CD4-positive, alpha-beta T cell (primary cell): ENCODE measurements at regions of chr1 and their contacts with region 1.

Region 1: GRCh38 chr1:30779294-30780071 is 21.9 kb upstream of the LAPTM5 start:
- DNase-seq: peak; percentile 78 to 98 (median 92)
- ATAC-seq: peak; percentile 75
- H3K4me3 ChIP-seq: no peak overlapping the region
- H3K4me3 Mint-ChIP-seq: no peak overlapping the region
- H3K27ac ChIP-seq: no peak overlapping the region
- H3K27ac Mint-ChIP-seq: peak overlapping the region; percentile 3
- H3K4me1 ChIP-seq: peaks cover 25% of the 10 kb centered on the region
- H3K4me1 Mint-ChIP-seq: peaks cover 16% of the 10 kb centered on the region
- H3K27me3 ChIP-seq: no peaks in the 10 kb centered on the region
- H3K27me3 Mint-ChIP-seq: no peaks in the 10 kb centered on the region
- CTCF ChIP-seq: peak; percentile 92

Region 2: DNA sequence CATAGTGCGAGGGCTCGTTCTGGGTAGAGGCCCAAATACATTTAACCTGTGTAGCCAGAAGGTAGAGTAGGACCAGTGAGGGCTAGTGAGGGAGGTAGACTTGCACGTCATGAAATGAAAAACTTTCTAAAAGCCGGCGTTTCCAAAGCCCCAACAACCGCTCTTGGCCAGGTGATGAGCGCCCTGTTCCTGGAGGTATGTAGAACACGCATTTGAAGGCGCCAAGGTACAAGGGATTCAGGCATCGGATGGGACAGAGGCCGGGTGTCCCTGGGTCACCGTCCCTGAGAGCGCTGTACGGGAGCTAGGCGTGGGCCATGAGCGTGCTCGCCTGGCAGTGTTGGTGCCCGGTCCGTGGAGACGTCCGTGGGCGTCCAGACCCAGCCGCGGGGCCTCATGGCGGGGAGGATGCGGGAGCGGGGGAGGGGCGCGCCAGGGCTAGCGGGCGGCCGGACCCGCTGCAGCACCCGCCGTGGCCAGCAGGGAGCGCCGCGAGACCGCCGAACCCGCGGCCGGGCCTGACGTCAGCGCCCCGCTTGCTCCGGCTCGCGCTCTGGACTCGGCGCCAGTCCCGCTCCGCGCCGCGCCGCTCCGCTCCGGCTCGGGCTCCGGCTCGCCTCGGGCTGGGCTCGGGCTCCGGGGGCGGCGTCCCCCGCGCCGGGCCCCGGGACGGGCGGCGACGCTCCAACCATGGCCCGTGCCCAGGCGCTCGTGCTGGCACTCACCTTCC is 1543.4 kb before region 1 on chr1 and contains the start of gene PTPRU:
- CTCF ChIA-PET with region 1: no interaction called
- POLR2A ChIA-PET with region 1: no interaction called
- intact Hi-C with region 1: loop called (anchors 2 kb)
- DNase-seq: peak; percentile 39 to 89 (median 77)
- ATAC-seq: peak; percentile 88
- H3K4me3 ChIP-seq: peak within 1 kb of the TSS; percentile 39
- H3K4me3 Mint-ChIP-seq: peak within 1 kb of the TSS; percentile 82
- H3K27ac ChIP-seq: no peak within 1 kb of the TSS
- H3K27ac Mint-ChIP-seq: peak within 1 kb of the TSS; percentile 25
- H3K4me1 ChIP-seq: peaks cover 26% of the 10 kb centered on the region
- H3K4me1 Mint-ChIP-seq: peaks cover 28% of the 10 kb centered on the region
- H3K27me3 ChIP-seq: peaks cover 34 to 48% of the 10 kb centered on the region in 2 experiments
- H3K27me3 Mint-ChIP-seq: peaks cover 57% of the 10 kb centered on the region
- CTCF ChIP-seq: peak; percentile 62
- total RNA-seq, gene PTPRU: 0.16 to 0.56 TPM

Region 3: DNA sequence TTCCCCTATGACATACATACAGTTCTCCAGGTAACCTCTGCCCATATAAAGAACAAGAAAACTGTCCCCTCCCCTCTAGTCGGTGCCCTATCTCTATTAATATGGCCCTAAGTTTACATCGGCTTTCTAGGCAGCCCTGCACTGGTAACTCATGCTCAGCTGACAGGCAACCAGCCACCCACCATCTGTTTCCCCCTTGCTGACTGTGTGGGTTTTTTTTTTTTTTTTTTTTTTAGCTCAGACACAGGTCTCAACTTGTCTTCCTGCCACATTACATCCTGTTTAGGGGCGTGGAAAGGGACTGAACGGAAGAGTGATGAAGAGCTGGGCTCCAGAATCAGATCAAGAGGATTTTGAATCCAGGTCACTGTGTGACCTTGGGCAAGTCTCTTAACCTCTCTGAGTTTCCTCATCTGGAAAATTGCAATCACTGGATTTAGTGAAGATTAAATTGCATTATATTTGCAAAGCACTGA is 35.9 kb before region 1 on chr1:
- CTCF ChIA-PET with region 1: interaction called, 29 read pairs
- POLR2A ChIA-PET with region 1: interaction called, 22 read pairs
- intact Hi-C with region 1: loop called (anchors 2 kb)
- DNase-seq: peak; percentile 50 to 93 (median 64)
- ATAC-seq: peak; percentile 81
- H3K4me3 ChIP-seq: peak overlapping the region; percentile 42
- H3K4me3 Mint-ChIP-seq: peak overlapping the region; percentile 83
- H3K27ac ChIP-seq: peak overlapping the region; percentile 95 to 97
- H3K27ac Mint-ChIP-seq: peak overlapping the region; percentile 96
- H3K4me1 ChIP-seq: peaks cover 99% of the 10 kb centered on the region
- H3K4me1 Mint-ChIP-seq: peaks cover 100% of the 10 kb centered on the region
- H3K27me3 ChIP-seq: no peaks in the 10 kb centered on the region
- H3K27me3 Mint-ChIP-seq: no peaks in the 10 kb centered on the region
- CTCF ChIP-seq: no peak

Region 4: DNA sequence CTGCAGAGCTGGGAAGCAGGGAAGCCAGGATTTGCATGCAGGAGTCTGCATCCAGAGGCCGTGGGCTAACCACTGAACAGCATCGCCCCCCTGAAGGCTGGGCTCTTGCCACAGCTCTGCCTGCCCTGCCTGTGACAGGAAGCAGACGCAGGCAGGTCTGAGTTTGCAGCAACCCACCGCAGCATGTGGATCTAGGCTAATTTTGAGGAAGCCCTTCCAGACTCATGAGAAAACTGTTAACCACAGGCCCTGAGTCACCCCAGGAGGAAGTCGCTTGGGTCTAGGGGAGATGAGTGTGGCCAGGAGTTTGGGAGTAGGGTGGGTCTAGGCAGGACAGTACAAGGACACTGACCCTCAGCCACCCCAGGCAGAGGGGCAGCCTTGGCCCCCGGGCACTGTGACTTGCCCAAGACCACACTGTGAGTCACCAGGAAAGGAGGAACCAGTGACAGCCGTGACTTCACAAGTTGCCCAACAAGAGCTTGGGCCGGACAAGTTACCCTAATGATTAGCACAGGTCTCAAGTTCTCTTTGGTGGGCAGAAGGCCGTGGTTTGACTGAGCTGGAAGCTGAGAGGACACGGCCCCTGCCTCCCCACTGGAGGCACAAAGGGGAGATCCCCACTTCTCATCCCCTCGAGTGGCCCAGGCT is 22.8 kb before region 1 on chr1:
- CTCF ChIA-PET with region 1: interaction called, 47 read pairs
- POLR2A ChIA-PET with region 1: interaction called, 10 read pairs
- intact Hi-C with region 1: loop called (anchors 1 to 2 kb)
- DNase-seq: peak; percentile 48 to 91 (median 71)
- ATAC-seq: peak; percentile 64
- H3K4me3 ChIP-seq: peak overlapping the region; percentile 99
- H3K4me3 Mint-ChIP-seq: peak overlapping the region; percentile 96
- H3K27ac ChIP-seq: peak overlapping the region; percentile 95 to 97
- H3K27ac Mint-ChIP-seq: peak overlapping the region; percentile 96
- H3K4me1 ChIP-seq: peaks cover 91% of the 10 kb centered on the region
- H3K4me1 Mint-ChIP-seq: peaks cover 98% of the 10 kb centered on the region
- H3K27me3 ChIP-seq: no peaks in the 10 kb centered on the region
- H3K27me3 Mint-ChIP-seq: no peaks in the 10 kb centered on the region
- CTCF ChIP-seq: no peak

Region 5: DNA sequence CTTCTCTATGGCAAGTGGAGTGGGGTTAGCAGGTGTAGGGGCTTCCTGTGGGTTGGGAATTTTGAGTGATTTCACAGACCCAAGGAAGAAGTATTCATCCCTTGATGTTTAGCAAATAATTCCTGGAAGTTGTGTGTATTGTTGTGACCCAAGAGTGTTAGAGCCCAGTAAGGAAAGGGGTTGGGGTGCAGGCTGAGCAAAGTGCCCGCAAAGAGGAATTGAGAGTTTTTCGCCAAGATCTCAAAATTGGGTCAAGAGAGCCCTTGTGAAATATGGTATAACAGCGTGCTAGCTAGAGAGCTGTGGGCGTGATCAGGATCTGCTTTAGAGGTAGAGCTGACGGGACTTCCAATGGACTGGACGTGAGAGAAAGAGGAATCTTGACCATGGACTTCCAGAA is 51.1 kb after region 1 on chr1:
- CTCF ChIA-PET with region 1: no interaction called
- POLR2A ChIA-PET with region 1: no interaction called
- intact Hi-C with region 1: no loop called
- DNase-seq: no peak
- ATAC-seq: no peak
- H3K4me3 ChIP-seq: no peak overlapping the region
- H3K4me3 Mint-ChIP-seq: no peak overlapping the region
- H3K27ac ChIP-seq: no peak overlapping the region
- H3K27ac Mint-ChIP-seq: no peak overlapping the region
- H3K4me1 ChIP-seq: no peaks in the 10 kb centered on the region
- H3K4me1 Mint-ChIP-seq: peaks cover 1% of the 10 kb centered on the region
- H3K27me3 ChIP-seq: peaks cover 6 to 17% of the 10 kb centered on the region in 2 experiments
- H3K27me3 Mint-ChIP-seq: peaks cover 47% of the 10 kb centered on the region
- CTCF ChIP-seq: no peak

Region 6: DNA sequence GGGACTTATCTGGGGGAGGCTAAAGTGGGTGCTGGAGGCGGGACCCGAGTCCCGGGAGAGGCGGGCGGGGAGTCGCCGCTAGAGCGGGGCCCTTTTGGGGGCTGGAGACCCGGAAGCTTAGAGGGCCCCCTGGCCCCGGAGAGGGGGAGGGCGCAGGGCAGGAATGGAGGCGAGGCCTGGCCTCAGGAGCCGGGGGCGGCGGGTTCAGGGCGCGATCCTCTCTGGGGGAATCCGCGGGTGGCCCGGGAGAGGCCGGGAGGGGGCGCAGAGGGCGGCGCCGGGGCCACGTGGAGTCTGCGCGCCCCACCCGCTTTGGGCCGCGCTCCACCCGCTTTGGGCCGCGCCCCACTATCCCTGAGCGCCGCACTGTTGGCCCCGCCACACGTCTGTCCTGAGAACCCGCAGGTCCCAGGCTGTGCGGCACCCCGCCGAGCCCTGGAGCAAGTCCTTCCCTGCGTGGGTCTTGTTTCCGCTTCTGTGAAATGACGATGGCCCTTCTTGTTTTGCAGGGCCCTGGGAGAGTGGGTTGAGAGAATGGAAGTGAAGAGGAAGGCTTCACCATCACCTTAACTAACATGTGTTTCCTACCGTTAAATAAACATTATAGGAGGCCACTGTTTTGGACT is 375.8 kb after region 1 on chr1:
- CTCF ChIA-PET with region 1: no interaction called
- POLR2A ChIA-PET with region 1: no interaction called
- intact Hi-C with region 1: loop called in 1 of 2 experiments (anchors 10 kb)
- DNase-seq: peak; percentile 14 to 78 (median 32)
- ATAC-seq: peak; percentile 81
- H3K4me3 ChIP-seq: peak overlapping the region; percentile 66
- H3K4me3 Mint-ChIP-seq: peak overlapping the region; percentile 89
- H3K27ac ChIP-seq: no peak overlapping the region
- H3K27ac Mint-ChIP-seq: peak overlapping the region; percentile 40
- H3K4me1 ChIP-seq: peaks cover 14% of the 10 kb centered on the region
- H3K4me1 Mint-ChIP-seq: peaks cover 12% of the 10 kb centered on the region
- H3K27me3 ChIP-seq: no peaks in the 10 kb centered on the region
- H3K27me3 Mint-ChIP-seq: no peaks in the 10 kb centered on the region
- CTCF ChIP-seq: peak; percentile 35